ENCODE measurements at regions of chr10 and their contacts with region 1.

Region 1: DNA sequence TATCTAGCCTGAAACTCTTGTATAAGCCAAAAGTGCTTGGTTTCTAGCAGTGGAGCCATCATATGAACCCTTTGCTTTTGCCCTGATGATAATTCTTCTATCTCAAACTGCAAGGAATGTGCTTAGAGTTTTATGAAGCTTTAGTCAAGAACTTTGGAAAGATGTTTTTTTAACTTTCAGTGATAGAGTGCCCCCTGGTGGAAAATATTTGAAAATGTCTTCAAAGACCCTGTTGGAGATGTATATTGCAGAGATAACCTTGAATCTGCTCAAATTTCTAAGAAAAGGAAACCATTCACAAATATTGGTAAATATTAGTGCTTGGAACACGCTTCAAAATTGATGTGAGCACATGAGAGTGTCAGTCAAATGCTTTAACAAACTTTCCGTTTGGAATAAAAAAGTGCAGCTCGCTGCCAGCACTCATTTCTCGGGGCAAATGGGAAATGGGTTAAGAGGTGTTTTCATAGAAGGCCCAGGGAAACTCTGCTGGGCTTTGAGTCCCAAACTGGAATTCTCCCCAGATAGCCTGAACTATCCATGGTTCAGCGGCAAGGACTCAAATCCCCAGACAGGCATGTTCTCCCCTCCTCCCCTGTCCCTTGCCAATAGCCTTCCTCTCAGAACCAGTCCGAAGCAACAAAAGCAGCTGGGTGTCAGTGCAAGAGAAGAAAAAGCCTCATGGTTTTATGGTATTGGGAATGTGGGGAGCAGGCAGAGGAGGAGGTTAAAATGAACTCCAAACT is 129.3 kb downstream of the MYOF start:
- DNase-seq: no peak
- H3K4me3 ChIP-seq: no peak overlapping the region
- CTCF ChIP-seq: peak; percentile 17

Region 2: DNA sequence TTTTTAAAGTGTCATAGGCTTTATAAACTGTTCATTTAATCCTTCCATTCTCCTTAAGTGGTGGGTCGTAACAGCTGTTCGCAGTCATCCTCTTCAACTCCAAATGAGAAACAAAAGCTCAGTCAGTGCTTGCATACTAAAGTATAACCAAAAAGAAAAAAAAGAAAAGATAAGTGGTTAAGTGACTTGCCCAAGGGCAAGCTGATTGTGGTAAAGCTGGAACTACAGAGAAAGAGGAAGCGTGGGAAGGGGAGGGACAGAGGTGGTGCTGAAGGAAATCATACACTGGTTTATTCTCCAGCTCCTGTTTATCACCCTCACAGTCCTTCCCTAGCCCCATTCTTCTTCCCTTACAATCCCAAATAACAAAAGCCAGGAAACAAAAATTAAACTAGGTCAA is 808.5 kb before region 1 on chr10:
- CTCF ChIA-PET with region 1: no interaction called
- POLR2A ChIA-PET with region 1: no interaction called
- DNase-seq: no peak
- H3K4me3 ChIP-seq: no peak overlapping the region
- CTCF ChIP-seq: no peak

Region 3: DNA sequence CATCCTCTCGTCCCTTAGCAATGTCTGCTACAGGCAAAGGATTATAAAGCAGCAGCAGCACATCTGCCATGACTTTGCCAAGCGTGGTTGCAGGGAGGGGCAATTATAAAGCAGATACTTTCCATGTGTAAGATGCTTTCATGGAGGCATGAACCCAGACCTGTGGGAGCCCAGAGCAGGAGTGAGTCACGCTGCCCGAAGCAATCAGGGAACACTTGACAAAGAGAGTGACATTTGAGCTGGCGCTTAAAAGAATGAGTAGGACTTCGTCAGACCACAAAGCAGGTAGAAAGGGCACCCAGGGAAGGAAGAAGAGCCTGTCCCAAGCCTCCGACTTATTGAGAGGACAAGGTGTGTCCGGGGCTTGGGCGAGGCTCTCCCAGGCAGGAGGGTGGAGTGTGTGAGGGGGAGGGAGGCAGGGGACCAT is 17.9 kb before region 1 on chr10:
- CTCF ChIA-PET with region 1: interaction called, 88 read pairs
- POLR2A ChIA-PET with region 1: no interaction called
- DNase-seq: peak; percentile 33
- H3K4me3 ChIP-seq: no peak overlapping the region
- CTCF ChIP-seq: no peak

Region 4: GRCh38 chr10:93368210-93368609 is 15.4 kb after region 1 on chr10:
- CTCF ChIA-PET with region 1: interaction called, 178 read pairs
- POLR2A ChIA-PET with region 1: no interaction called
- DNase-seq: no peak
- H3K4me3 ChIP-seq: no peak overlapping the region
- CTCF ChIP-seq: no peak

Measured in AG04449 (cell line).